MCF 10A (cell line): ENCODE measurements at regions of chr1 and their contacts with region 1.

Region 1: GRCh38 chr1:5992026-5992813 is at the start of gene NPHP4:
- DNase-seq: peak; percentile 99
- H3K4me3 Mint-ChIP-seq: peak within 1 kb of the TSS; percentile 76
- H3K27ac Mint-ChIP-seq: peak within 1 kb of the TSS; percentile 86
- H3K4me1 Mint-ChIP-seq: peaks cover 6% of the 10 kb centered on the region
- H3K27me3 Mint-ChIP-seq: no peaks in the 10 kb centered on the region
- CTCF ChIP-seq: no peak
- total RNA-seq, gene NPHP4: 14.4 and 15.0 TPM in 2 replicates

Region 2: DNA sequence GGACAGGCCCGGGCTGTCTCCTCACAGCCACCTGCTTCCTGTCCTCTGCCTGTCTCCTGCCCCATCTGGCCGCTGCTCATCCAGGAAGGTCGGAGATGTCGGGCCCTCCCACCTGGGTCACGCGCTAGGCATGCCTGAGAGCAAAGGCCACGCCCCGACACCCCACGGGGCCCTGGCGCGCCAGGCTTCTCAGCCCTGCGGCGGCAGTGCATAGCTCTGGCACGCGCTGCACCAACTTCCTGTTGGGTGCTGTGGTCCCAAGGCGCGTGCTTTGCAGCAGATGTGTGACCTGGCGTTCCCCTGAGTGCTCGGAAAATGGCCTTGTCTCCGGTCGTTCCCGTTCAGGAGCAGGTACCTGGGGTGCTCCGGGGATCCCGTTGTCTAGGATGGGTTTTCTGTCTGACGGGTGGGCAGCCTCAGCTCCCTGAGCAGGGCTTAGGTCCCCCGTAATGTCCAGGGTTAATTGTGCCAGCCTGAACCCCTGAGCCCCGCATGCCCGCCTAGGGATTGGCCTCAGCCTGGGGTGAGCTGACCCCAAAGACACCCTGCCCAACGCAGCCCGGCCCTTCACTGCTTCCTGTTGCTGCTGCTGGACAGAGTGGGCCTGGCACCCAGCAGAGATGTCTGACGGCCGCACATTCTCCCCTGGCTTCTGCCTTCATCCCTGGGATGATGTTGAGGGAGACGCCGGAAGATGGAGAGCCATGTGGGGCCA is 34.0 kb after region 1 on chr1:
- CTCF ChIA-PET with region 1: no interaction called
- POLR2A ChIA-PET with region 1: interaction called, 34 read pairs
- intact Hi-C with region 1: loop called (anchors 1 kb)
- DNase-seq: peak; percentile 89
- H3K4me3 Mint-ChIP-seq: peak overlapping the region; percentile 80
- H3K27ac Mint-ChIP-seq: peak overlapping the region; percentile 64
- H3K4me1 Mint-ChIP-seq: peaks cover 20% of the 10 kb centered on the region
- H3K27me3 Mint-ChIP-seq: no peaks in the 10 kb centered on the region
- CTCF ChIP-seq: no peak